ENCODE measurements at regions of chr17 and their contacts with region 1.

Region 1: DNA sequence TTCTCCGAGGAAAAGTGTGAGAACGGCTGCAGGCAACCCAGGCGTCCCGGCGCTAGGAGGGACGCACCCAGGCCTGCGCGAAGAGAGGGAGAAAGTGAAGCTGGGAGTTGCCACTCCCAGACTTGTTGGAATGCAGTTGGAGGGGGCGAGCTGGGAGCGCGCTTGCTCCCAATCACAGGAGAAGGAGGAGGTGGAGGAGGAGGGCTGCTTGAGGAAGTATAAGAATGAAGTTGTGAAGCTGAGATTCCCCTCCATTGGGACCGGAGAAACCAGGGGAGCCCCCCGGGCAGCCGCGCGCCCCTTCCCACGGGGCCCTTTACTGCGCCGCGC is at the start of gene ERBB2:
- DNase-seq: peak; percentile 57
- H3K4me3 ChIP-seq: peak within 1 kb of the TSS; percentile 44 to 58 (median 52)
- H3K27ac ChIP-seq: no peak within 1 kb of the TSS
- H3K4me1 ChIP-seq: no peaks in the 10 kb centered on the region
- H3K27me3 ChIP-seq: peaks cover 0 to 2% of the 10 kb centered on the region in 2 experiments
- CTCF ChIP-seq: no peak
- POLR2A ChIP-seq: peak; percentile 64
- total RNA-seq, gene ERBB2: 29.1 and 32.9 TPM in 2 replicates

Region 2: GRCh38 chr17:39605492-39606433 is 94.0 kb before region 1 on chr17:
- CTCF ChIA-PET with region 1: no interaction called
- POLR2A ChIA-PET with region 1: no interaction called
- dilution Hi-C with region 1: no loop called
- intact Hi-C with region 1: no loop called
- DNase-seq: peak; percentile 13
- H3K4me3 ChIP-seq: no peak overlapping the region
- H3K27ac ChIP-seq: no peak overlapping the region
- H3K4me1 ChIP-seq: no peaks in the 10 kb centered on the region
- H3K27me3 ChIP-seq: peaks cover 72 to 87% of the 10 kb centered on the region in 2 experiments
- CTCF ChIP-seq: no peak
- POLR2A ChIP-seq: no peak

Region 3: GRCh38 chr17:39719563-39720355 is 20.0 kb after region 1 on chr17:
- CTCF ChIA-PET with region 1: interaction called, 13 read pairs
- POLR2A ChIA-PET with region 1: no interaction called
- dilution Hi-C with region 1: no loop called
- intact Hi-C with region 1: no loop called
- DNase-seq: no peak
- H3K4me3 ChIP-seq: no peak overlapping the region
- H3K27ac ChIP-seq: no peak overlapping the region
- H3K4me1 ChIP-seq: peaks cover 19% of the 10 kb centered on the region
- H3K27me3 ChIP-seq: no peaks in the 10 kb centered on the region
- CTCF ChIP-seq: no peak
- POLR2A ChIP-seq: no peak

Region 4: GRCh38 chr17:39769974-39770587 is 70.3 kb after region 1 on chr17:
- CTCF ChIA-PET with region 1: no interaction called
- POLR2A ChIA-PET with region 1: no interaction called
- dilution Hi-C with region 1: no loop called
- intact Hi-C with region 1: no loop called
- DNase-seq: no peak
- H3K4me3 ChIP-seq: no peak overlapping the region
- H3K27ac ChIP-seq: no peak overlapping the region
- H3K4me1 ChIP-seq: no peaks in the 10 kb centered on the region
- H3K27me3 ChIP-seq: peaks cover 41 to 44% of the 10 kb centered on the region in 2 experiments
- CTCF ChIP-seq: no peak
- POLR2A ChIP-seq: no peak

Region 5: DNA sequence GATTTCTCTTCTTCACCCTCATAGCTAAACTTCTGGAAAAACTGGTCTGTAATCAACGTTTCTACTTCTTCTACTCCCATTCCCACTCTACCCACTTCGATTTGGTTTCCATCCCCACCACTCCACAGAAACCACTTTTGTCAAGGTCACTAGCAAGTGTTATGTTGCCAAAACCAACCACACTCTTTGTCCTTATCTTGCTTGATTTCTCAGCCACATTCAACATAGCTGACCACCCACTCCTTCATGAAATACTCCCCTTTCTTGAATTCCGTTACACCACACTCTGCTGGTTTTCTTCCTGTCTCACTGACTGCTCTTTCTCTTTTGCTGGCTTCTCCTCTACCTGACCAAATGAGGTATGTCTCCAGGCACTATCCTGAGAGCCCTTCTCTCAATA is 152.5 kb after region 1 on chr17:
- CTCF ChIA-PET with region 1: no interaction called
- POLR2A ChIA-PET with region 1: no interaction called
- dilution Hi-C with region 1: no loop called
- intact Hi-C with region 1: no loop called
- DNase-seq: no peak
- H3K4me3 ChIP-seq: no peak overlapping the region
- H3K27ac ChIP-seq: no peak overlapping the region
- H3K4me1 ChIP-seq: no peaks in the 10 kb centered on the region
- H3K27me3 ChIP-seq: peaks cover 19 to 20% of the 10 kb centered on the region in 2 experiments
- CTCF ChIP-seq: no peak
- POLR2A ChIP-seq: no peak

Region 6: DNA sequence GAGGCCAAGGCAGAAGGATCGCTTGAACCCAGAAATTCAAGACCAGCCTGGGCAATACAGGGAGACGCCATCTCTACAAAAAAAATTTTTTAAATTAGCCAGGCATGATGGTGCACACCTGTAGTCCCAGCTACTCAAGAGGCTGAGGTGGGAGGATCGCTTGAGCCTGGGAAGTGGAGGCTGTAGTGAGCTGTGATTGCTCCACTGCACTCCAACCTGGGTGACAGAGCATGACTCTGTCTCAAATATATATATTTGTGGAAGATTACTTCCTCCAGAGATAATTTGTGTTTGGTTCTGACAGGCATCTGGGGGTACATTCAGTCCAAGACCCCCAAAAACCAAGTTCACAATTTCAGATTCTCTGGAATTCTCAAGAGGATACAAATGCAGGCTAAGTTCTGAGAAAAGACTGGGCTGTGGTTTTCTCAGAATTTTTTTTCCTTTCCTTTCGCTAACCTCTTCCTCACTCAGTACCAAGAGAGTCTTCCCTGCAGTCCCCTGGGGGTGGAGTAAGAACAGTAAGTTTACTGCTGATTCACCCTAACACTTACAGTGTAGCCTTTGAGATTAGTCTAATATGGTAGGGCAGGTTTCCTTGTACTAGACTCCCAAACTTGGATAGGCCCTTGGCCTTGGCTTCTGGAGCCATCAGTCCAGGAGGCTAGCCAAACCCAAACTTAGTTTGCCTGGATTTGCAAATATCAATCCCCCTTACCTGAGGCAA is 203.5 kb after region 1 on chr17:
- CTCF ChIA-PET with region 1: no interaction called
- POLR2A ChIA-PET with region 1: no interaction called
- dilution Hi-C with region 1: no loop called
- intact Hi-C with region 1: no loop called
- DNase-seq: no peak
- H3K4me3 ChIP-seq: no peak overlapping the region
- H3K27ac ChIP-seq: no peak overlapping the region
- H3K4me1 ChIP-seq: no peaks in the 10 kb centered on the region
- H3K27me3 ChIP-seq: no peaks in the 10 kb centered on the region
- CTCF ChIP-seq: no peak
- POLR2A ChIP-seq: no peak